ENCODE measurements at regions of chrX and their contacts with region 1.

Region 1: DNA sequence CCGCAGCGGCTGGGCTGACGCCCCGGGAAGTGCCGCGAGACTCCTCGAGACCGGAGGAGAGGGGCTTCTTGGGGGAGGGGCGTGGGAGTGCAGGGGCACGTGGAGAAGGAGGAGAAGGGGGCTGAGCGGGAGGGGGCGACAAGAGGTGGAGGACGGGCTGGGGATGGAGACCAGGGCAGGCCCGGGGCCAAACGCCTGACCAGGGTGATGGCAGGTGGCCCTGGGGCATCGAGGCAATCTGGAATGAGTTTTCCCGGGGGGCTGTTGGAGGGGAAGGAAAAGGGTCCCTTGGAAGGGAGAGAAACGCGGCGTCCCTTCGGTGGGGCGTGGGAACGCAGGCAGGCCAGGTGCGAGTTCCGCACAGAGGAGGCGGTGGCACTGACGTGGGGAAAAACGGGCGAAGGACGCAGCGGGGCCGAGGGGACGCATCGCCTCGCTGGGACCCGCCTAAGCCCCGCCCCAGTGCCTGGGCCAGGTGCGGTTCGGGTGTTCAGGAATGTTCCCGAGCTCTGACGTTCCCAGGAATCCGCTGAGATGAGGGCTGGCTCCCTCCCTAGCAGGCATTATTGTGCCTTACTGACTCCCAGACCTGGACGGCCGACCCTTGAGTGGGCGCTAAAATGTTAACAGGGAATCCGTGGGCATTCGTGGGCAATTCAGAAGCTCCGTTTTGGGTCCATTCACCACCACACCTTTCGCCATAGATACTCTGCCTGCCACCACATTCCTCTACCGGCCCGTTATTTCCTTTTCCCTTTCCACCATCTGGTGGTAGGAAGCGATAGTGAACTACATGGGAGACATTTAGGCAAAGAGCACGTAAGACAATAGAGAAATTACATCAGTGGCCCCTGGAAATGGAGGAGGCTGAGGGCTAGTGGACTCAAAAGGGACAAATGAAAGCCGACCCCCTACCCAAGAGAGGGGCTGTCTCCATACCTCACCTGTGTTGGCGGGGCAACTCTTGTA is 795 bp upstream of the SH3KBP1 start:
- DNase-seq: peak; percentile 80 to 84
- H3K4me3 ChIP-seq: peak overlapping the region; percentile 63
- H3K4me3 Mint-ChIP-seq: peak overlapping the region; percentile 84
- H3K27ac Mint-ChIP-seq: peak overlapping the region; percentile 92
- H3K4me1 ChIP-seq: no peaks in the 10 kb centered on the region
- H3K4me1 Mint-ChIP-seq: peaks cover 12% of the 10 kb centered on the region
- H3K27me3 ChIP-seq: no peaks in the 10 kb centered on the region
- H3K27me3 Mint-ChIP-seq: no peaks in the 10 kb centered on the region
- CTCF ChIP-seq: peak; percentile 39 to 54

Region 2: DNA sequence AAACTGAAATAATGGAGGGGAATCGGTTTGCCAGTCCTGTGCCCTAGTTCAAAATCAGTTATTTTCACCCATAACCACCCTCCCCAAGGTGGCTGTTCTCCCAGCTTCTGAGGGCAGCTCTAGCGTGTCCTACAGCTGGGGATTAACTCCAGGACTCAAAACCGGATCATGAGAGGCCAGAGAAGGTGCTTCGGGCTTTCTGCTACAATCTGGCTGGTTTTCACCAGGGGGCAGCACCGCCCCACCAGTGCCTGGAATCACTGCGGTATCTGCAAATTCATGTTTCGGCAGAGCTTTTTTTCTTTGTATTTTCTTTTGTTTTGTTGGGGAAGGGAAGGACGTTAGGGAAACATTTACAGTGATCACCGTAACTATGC is 516.0 kb before region 1 on chrX:
- CTCF ChIA-PET with region 1: interaction called, 5 read pairs
- POLR2A ChIA-PET with region 1: no interaction called
- intact Hi-C with region 1: loop called (anchors 5 kb)
- DNase-seq: peak; percentile 55 to 72
- H3K4me3 ChIP-seq: peak overlapping the region; percentile 26
- H3K4me3 Mint-ChIP-seq: peak overlapping the region; percentile 63
- H3K27ac Mint-ChIP-seq: peak overlapping the region; percentile 24
- H3K4me1 ChIP-seq: no peaks in the 10 kb centered on the region
- H3K4me1 Mint-ChIP-seq: no peaks in the 10 kb centered on the region
- H3K27me3 ChIP-seq: no peaks in the 10 kb centered on the region
- H3K27me3 Mint-ChIP-seq: no peaks in the 10 kb centered on the region
- CTCF ChIP-seq: peak; percentile 66 to 72

Region 3: GRCh38 chrX:19544693-19545305 is 343.4 kb before region 1 on chrX:
- CTCF ChIA-PET with region 1: no interaction called
- POLR2A ChIA-PET with region 1: no interaction called
- intact Hi-C with region 1: loop called (anchors 1 kb)
- DNase-seq: peak in 1 of 2 experiments; percentile 52
- H3K4me3 ChIP-seq: no peak overlapping the region
- H3K4me3 Mint-ChIP-seq: no peak overlapping the region
- H3K27ac Mint-ChIP-seq: peak overlapping the region; percentile 8
- H3K4me1 ChIP-seq: no peaks in the 10 kb centered on the region
- H3K4me1 Mint-ChIP-seq: no peaks in the 10 kb centered on the region
- H3K27me3 ChIP-seq: no peaks in the 10 kb centered on the region
- H3K27me3 Mint-ChIP-seq: no peaks in the 10 kb centered on the region
- CTCF ChIP-seq: peak; percentile 47 to 59

Region 4: GRCh38 chrX:19593690-19594089 is 294.5 kb before region 1 on chrX:
- CTCF ChIA-PET with region 1: interaction called, 3 read pairs
- POLR2A ChIA-PET with region 1: no interaction called
- intact Hi-C with region 1: loop called (anchors 5 kb)
- DNase-seq: peak in 1 of 2 experiments; percentile 30
- H3K4me3 ChIP-seq: no peak overlapping the region
- H3K4me3 Mint-ChIP-seq: no peak overlapping the region
- H3K27ac Mint-ChIP-seq: no peak overlapping the region
- H3K4me1 ChIP-seq: no peaks in the 10 kb centered on the region
- H3K4me1 Mint-ChIP-seq: peaks cover 13% of the 10 kb centered on the region
- H3K27me3 ChIP-seq: no peaks in the 10 kb centered on the region
- H3K27me3 Mint-ChIP-seq: no peaks in the 10 kb centered on the region
- CTCF ChIP-seq: peak in 1 of 2 experiments; percentile 12

Region 5: DNA sequence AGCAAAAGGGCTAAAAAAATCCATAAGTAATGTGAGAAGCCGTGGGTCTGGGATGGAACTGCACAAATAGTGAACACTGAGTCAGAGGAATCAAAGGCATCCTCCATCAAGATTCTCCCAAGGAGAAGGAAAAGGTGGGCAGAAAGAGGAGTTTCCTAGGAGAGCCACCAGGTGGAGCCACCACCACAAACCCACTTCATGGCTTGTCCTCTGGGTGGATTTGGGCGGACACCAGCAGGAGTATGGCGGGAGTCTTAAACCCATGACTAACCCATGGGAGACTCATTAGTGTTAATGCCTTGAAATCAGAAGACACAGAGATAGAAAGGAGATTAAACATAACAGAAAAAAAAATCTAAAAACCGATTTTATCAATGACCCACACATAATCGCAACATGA is 148.5 kb before region 1 on chrX:
- CTCF ChIA-PET with region 1: interaction called, 6 read pairs
- POLR2A ChIA-PET with region 1: interaction called, 4 read pairs
- intact Hi-C with region 1: loop called (anchors 1 kb)
- DNase-seq: peak; percentile 60 to 71
- H3K4me3 ChIP-seq: no peak overlapping the region
- H3K4me3 Mint-ChIP-seq: peak overlapping the region; percentile 41
- H3K27ac Mint-ChIP-seq: peak overlapping the region; percentile 85
- H3K4me1 ChIP-seq: peaks cover 17% of the 10 kb centered on the region
- H3K4me1 Mint-ChIP-seq: peaks cover 25% of the 10 kb centered on the region
- H3K27me3 ChIP-seq: no peaks in the 10 kb centered on the region
- H3K27me3 Mint-ChIP-seq: no peaks in the 10 kb centered on the region
- CTCF ChIP-seq: peak; percentile 54 to 69

Region 6: DNA sequence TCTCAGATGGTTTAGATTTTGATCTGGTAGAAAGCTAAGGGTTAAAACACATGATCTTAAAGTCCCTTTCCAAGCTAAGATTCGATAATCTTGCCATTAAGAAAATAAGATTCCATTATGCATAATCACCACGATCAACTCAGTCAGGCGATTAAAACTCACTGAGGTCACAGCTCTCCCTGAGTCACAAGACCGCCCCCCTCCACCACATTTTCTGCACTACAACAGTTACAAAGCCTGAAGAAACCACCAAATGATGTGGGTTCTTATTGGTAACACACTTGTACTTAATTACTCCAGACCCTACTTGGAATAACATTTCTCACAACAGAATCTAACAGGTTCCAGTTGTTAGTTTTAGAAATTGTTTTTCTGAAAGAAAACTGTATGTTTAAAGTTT is 63.6 kb before region 1 on chrX:
- CTCF ChIA-PET with region 1: no interaction called
- POLR2A ChIA-PET with region 1: no interaction called
- intact Hi-C with region 1: loop called (anchors 10 kb)
- DNase-seq: no peak
- H3K4me3 ChIP-seq: no peak overlapping the region
- H3K4me3 Mint-ChIP-seq: no peak overlapping the region
- H3K27ac Mint-ChIP-seq: no peak overlapping the region
- H3K4me1 ChIP-seq: peaks cover 13% of the 10 kb centered on the region; the same call in 1 of the 2 replicates
- H3K4me1 Mint-ChIP-seq: peaks cover 6% of the 10 kb centered on the region
- H3K27me3 ChIP-seq: no peaks in the 10 kb centered on the region
- H3K27me3 Mint-ChIP-seq: no peaks in the 10 kb centered on the region
- CTCF ChIP-seq: no peak

Region 7: DNA sequence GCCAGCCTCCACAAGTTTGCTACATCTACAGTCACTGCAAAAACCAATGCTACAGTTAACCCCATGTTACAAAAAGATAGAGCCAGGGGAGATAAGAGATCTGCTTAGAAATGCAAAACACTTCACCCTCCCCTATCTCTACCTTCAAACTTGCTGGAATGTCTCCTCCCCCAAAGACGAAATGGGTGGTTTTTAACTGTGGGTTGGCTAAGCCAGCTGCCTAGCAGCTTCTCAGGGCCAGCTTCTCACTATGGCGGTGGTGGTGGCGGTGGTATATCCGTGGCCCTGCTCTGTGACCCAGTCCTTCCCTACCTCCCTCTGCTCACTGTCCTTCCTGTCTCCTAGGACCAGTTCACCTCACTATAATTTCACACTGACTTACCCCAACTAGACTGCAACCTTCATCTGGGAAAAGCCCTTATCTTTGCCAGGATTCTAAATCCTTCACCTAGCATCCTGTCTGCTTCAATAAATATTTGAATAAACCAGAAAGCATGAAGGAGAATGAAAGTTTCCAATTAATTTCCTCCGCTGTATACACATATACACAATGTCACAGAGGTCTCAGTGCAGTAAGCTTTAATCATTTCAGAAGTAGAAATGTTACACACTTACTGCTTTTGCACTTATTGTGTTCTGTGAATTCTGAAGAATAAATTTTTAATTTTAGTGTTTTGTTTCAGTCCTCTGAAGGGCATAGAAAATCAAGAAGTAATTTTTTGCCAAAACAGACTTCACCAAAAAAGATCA is 47.1 kb before region 1 on chrX:
- CTCF ChIA-PET with region 1: no interaction called
- POLR2A ChIA-PET with region 1: no interaction called
- intact Hi-C with region 1: loop called (anchors 5 kb)
- DNase-seq: peak; percentile 52 to 63
- H3K4me3 ChIP-seq: no peak overlapping the region
- H3K4me3 Mint-ChIP-seq: peak overlapping the region; percentile 36
- H3K27ac Mint-ChIP-seq: peak overlapping the region; percentile 57
- H3K4me1 ChIP-seq: peaks cover 12% of the 10 kb centered on the region
- H3K4me1 Mint-ChIP-seq: peaks cover 12% of the 10 kb centered on the region
- H3K27me3 ChIP-seq: no peaks in the 10 kb centered on the region
- H3K27me3 Mint-ChIP-seq: no peaks in the 10 kb centered on the region
- CTCF ChIP-seq: no peak

Measured in Caco-2 (cell line).